Panc1 (cell line): ENCODE measurements at regions of chr16 and their contacts with region 1.

Region 1: GRCh38 chr16:81623363-81624102 is 155.6 kb upstream of the PLCG2 start:
- DNase-seq: no peak
- ATAC-seq: 0 out of 2 replicates have a peak, but pooled peaks have one; percentile 40
- H3K4me3 ChIP-seq: no peak overlapping the region
- H3K27ac ChIP-seq: no peak overlapping the region
- H3K4me1 ChIP-seq: no peaks in the 10 kb centered on the region; the same call in 1 of the 2 replicates
- H3K27me3 ChIP-seq: no peaks in the 10 kb centered on the region
- CTCF ChIP-seq: no peak; the same call in 1 of the 2 replicates

Region 2: DNA sequence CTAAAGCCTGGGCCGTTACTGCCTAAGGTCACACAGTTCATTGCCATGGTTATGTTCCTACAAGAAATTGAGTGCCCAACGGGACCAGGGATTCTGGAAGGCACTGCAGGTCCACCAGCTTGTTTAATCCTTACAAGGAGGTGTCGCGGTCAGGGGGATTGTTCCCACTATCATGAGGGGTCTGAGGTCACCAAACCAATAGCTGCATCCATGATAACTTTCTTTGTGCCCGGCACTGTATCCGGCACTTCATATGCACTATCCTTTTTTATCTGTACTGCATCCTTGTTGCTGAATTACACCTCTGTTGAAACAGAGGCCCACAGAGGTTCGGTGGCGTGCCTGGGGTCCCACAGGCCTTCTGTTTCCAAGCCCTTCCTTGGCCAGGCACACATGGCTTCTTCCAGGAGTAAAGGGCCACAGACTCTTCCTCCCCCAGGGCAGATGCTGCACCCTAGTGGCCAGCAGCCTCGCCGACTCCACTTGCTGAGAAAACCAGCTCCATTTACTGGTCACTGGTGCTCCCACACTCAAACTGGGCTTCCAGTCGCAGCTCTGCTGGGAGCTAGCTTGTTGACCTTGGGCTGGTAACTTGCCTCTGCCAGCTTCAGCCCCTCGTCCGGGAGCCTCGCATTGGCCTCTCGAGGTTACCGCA is 73.6 kb after region 1 on chr16:
- CTCF ChIA-PET with region 1: no interaction called
- POLR2A ChIA-PET with region 1: no interaction called
- in situ Hi-C with region 1: no loop called
- intact Hi-C with region 1: loop called (anchors 2 kb)
- DNase-seq: peak; percentile 22
- ATAC-seq: peak; percentile 76
- H3K4me3 ChIP-seq: no peak overlapping the region
- H3K27ac ChIP-seq: no peak overlapping the region
- H3K4me1 ChIP-seq: no peaks in the 10 kb centered on the region
- H3K27me3 ChIP-seq: no peaks in the 10 kb centered on the region
- CTCF ChIP-seq: peak; percentile 83